Activated CD4-positive, alpha-beta T cell treated with anti-CD3 and anti-CD28 coated beads, Interleukin-2, amount 10 ng/mL, durations not matched to agents 7 days and 5 days (primary cell): ENCODE measurements at regions of chr7 and their contacts with region 1.

Region 1: GRCh38 chr7:143248761-143249354 is 14.4 kb upstream of the GSTK1 start:
- DNase-seq: no peak
- H3K4me3 Mint-ChIP-seq: no peak overlapping the region
- H3K27ac Mint-ChIP-seq: peak overlapping the region; percentile 60
- H3K4me1 Mint-ChIP-seq: peaks cover 88% of the 10 kb centered on the region
- H3K27me3 Mint-ChIP-seq: no peaks in the 10 kb centered on the region

Region 2: DNA sequence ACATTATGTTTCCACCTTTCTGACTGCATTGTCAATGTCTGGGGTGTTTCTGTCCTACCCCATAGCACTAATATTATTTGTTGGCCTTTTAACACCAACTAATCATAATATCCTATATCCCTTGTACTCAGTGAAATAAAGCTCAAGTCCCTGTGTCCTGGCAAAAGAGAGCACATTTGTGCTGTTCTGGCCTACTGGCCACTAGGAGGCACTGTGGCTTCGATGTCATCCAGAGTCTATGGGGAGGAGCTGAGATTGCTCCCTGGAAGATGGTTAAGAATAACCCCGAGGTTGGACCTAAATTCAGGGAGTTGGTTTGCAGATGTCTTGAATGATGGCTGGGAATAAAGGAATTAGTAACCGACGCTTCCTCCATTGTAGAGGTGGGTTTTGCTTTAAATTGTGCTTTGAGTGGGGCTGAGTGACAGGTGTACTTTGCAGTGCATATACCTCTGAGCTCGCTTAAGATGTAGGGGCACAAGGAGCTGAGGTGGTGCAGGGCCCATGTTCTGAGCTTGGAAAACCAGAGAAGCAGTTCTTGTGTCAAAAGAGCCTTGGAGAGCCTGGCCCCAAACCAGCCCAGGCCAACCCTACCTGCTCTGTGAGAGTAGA is 690.8 kb before region 1 on chr7:
- CTCF ChIA-PET with region 1: no interaction called
- POLR2A ChIA-PET with region 1: no interaction called
- DNase-seq: peak; percentile 62
- H3K4me3 Mint-ChIP-seq: peak overlapping the region; percentile 45
- H3K27ac Mint-ChIP-seq: no peak overlapping the region
- H3K4me1 Mint-ChIP-seq: peaks cover 11% of the 10 kb centered on the region
- H3K27me3 Mint-ChIP-seq: no peaks in the 10 kb centered on the region

Region 3: GRCh38 chr7:143263266-143264195 is 14.7 kb after region 1 on chr7 and contains the start of gene GSTK1:
- CTCF ChIA-PET with region 1: interaction called, 10 read pairs
- POLR2A ChIA-PET with region 1: interaction called, 5 read pairs
- DNase-seq: peak; percentile 83
- H3K4me3 Mint-ChIP-seq: peak within 1 kb of the TSS; percentile 97
- H3K27ac Mint-ChIP-seq: peak within 1 kb of the TSS; percentile 94
- H3K4me1 Mint-ChIP-seq: peaks cover 78% of the 10 kb centered on the region
- H3K27me3 Mint-ChIP-seq: no peaks in the 10 kb centered on the region
- total RNA-seq, gene GSTK1: 370 to 419 TPM